AG04449 (cell line): ENCODE measurements at regions of chr3 and their contacts with region 1.

Region 1: DNA sequence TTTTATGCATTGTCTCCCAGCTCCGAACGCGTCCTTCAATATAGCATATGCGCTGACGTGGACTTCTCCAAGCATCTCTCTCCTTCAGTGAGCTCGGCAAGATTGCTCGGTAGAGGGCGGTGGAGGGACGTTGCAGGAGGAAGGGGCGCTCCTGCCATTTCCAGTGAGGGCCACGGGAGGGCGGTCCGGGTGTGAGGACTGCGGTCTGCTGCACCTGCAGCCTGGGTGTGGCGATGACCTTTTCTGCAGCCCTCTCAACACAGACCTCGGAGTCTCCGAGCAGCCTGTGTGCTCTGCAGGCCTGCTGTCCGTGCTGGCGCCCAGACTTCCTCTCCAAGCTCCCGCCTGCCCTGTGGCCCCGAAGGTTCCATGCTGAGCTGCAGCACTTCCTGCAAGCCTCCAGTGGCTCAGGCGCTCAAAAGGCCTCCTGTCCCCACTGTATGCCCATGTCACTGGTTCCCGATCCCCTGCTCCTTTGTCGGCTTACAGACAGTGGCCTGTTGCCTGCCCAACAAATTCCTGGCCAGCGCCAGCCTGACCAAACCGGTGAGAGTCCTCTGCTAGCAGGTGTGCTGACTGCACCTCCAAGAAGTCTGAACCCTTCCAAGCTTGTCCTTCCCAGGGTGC is 8.9 kb upstream of the RTP3 start:
- DNase-seq: no peak
- H3K4me3 ChIP-seq: no peak overlapping the region
- CTCF ChIP-seq: peak; percentile 100

Region 2: GRCh38 chr3:45437383-45437782 is 1051.5 kb before region 1 on chr3:
- CTCF ChIA-PET with region 1: no interaction called
- POLR2A ChIA-PET with region 1: no interaction called
- DNase-seq: no peak
- H3K4me3 ChIP-seq: no peak overlapping the region
- CTCF ChIP-seq: no peak

Region 3: GRCh38 chr3:46469680-46470357 is 19.0 kb before region 1 on chr3:
- CTCF ChIA-PET with region 1: interaction called, 46 read pairs
- POLR2A ChIA-PET with region 1: no interaction called
- DNase-seq: no peak
- H3K4me3 ChIP-seq: no peak overlapping the region
- CTCF ChIP-seq: no peak

Region 4: GRCh38 chr3:46527239-46527638 is 38.4 kb after region 1 on chr3:
- CTCF ChIA-PET with region 1: interaction called, 12 read pairs
- POLR2A ChIA-PET with region 1: no interaction called
- DNase-seq: no peak
- H3K4me3 ChIP-seq: no peak overlapping the region
- CTCF ChIP-seq: no peak

Region 5: DNA sequence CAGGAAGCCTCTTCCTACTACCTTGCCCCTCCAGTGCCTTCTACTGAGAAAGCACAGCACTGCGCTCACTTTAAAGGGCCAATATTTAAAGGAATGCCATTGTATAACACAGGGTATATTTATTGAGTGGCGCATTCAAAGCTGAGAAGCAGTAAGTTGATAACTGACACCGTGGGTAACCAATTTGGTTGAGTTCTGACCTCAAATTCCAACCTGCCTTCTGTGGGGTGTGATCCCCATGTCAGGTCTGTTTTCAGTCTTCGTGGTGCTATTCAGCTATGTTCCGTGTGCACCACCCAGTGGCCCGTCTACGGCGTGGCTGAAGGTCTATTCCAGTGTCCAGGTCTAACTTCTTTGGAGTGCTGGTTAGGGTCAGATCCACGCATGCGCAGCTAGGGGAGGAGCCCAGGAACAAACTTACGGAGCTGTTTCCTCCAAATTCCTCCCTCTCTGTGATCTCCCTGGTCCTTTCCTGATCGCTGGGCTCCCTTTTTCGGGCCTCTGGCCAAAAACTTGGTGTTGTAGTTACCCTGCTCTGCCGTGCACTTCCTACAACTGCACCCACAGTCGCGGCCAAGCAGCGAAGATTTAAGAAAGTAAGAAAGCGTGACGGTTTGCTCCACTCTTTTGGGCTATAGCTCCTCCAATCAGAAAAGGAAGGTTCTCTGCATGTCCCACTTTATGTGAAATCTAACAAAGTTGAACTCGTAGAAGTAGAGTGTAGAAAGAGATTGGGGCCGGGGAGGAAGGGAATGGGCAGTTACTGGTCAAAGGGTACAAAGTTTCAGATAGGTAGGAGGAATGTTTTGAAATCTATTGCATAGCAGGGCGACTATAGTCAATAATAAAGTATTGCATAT is 69.6 kb after region 1 on chr3:
- CTCF ChIA-PET with region 1: interaction called, 112 read pairs
- POLR2A ChIA-PET with region 1: no interaction called
- DNase-seq: no peak
- H3K4me3 ChIP-seq: peak overlapping the region; percentile 31; the same call in 1 of the 2 replicates
- CTCF ChIP-seq: peak; percentile 57

Region 6: DNA sequence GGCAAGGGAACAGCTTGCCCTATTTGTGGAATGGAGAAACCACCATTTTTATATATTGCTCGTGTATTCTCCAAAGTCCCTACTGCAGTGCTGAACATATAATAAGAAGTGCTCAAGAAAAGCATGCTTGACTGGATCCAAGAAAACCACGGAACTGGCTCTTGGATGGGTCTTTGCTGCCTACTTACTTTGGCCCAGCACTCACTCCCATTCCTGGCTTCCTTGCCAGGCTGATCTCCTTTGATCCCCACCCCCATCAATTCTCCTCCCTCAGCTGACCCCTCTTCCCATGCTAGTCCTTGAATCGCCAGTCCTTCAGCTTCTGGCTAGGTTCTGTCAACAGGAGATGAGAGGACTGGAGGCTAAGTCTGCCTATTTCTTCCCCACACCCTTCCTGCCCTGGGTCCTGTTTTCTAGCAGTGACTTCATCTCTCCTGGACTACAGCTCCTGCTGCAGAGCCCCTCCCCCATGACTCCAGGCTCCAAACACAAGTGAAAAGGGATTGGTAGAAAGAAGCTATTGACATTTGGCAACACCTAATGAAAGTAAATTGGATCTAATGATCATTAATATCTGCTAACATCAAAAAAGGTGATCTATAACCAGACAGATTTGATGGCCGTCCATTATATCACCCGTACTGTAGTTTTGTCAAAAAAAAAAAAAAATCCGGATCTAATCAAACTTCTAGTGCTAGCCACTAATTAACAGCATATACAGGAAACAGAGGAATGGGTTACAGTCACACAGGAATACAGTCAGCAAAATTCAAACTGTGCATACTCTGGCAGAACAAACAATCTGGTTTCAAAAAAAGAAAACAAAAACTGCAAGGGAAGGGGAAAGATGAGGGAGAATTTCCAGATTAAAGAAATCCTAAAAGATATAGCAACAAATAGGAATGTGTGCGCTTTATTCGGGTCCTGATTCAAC is 131.3 kb after region 1 on chr3:
- CTCF ChIA-PET with region 1: interaction called, 32 read pairs
- POLR2A ChIA-PET with region 1: no interaction called
- DNase-seq: no peak
- H3K4me3 ChIP-seq: no peak overlapping the region
- CTCF ChIP-seq: no peak

Region 7: GRCh38 chr3:46695177-46695961 is 206.5 kb after region 1 on chr3:
- CTCF ChIA-PET with region 1: interaction called, 10 read pairs
- POLR2A ChIA-PET with region 1: interaction called, 3 read pairs
- DNase-seq: no peak
- H3K4me3 ChIP-seq: no peak overlapping the region
- CTCF ChIP-seq: no peak